ENCODE measurements at regions of chr1 and their contacts with region 1.

Region 1: GRCh38 chr1:2429780-2430591 is 17.6 kb upstream of the PEX10 start:
- DNase-seq: no peak
- ATAC-seq: no peak

Region 2: GRCh38 chr1:2151252-2151651 is 278.7 kb before region 1 on chr1:
- intact Hi-C with region 1: no loop called
- DNase-seq: peak; percentile 69
- ATAC-seq: peak; percentile 78

Region 3: GRCh38 chr1:2523191-2523890 is 93.4 kb after region 1 on chr1:
- intact Hi-C with region 1: no loop called
- DNase-seq: no peak
- ATAC-seq: no peak

Region 4: DNA sequence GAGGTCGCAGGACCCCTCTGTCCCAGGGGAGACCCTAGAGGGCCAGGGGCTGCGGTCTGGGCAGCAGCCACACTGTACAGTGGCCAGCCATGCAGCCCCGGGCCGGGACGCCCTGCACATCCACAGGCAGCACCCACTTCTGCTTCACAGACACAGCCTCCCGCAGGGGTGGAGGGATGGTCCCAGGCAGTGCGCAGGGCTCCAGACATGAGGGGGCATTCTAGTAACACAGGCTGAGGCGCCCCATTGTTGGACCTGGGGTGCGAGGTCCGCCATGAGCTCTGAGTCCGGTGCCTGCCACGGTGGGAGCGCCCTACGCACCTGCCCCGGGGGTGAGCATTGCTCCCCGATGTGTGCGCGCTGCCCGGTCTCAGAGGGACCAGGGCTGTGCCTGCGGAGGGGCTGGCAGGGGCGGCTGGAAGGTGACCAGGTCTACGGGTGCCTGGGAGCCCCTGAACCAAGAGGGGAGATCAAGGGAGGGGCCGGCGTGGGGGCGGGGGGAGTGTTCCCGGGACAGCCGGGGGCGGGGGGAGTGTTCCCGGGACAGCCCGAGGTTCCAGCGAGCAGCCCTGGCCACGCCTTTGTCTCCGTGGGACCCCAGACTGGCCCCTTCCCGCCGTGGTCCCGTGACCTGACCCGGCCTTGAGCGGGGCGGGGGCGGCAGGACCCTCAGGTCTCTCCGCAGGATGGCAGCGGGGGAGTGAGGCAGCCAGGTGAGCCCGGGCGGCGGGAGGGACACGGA is 198.4 kb after region 1 on chr1:
- intact Hi-C with region 1: loop called (anchors 10 kb)
- DNase-seq: peak; percentile 30
- ATAC-seq: no peak